Body of pancreas (tissue), 4 donors: ENCODE measurements at regions of chr5 and their contacts with region 1.

Region 1: GRCh38 chr5:178732281-178732680 is 1.8 kb upstream of the ZNF354A start:
- DNase-seq: no peak
- ATAC-seq: no peak
- H3K4me3 ChIP-seq: no peak overlapping the region
- H3K27ac ChIP-seq: no peak overlapping the region
- H3K4me1 ChIP-seq: peaks cover 11% of the 10 kb centered on the region
- H3K27me3 ChIP-seq: no peaks in the 10 kb centered on the region
- CTCF ChIP-seq: no peak
- POLR2A ChIP-seq: no peak

Region 2: DNA sequence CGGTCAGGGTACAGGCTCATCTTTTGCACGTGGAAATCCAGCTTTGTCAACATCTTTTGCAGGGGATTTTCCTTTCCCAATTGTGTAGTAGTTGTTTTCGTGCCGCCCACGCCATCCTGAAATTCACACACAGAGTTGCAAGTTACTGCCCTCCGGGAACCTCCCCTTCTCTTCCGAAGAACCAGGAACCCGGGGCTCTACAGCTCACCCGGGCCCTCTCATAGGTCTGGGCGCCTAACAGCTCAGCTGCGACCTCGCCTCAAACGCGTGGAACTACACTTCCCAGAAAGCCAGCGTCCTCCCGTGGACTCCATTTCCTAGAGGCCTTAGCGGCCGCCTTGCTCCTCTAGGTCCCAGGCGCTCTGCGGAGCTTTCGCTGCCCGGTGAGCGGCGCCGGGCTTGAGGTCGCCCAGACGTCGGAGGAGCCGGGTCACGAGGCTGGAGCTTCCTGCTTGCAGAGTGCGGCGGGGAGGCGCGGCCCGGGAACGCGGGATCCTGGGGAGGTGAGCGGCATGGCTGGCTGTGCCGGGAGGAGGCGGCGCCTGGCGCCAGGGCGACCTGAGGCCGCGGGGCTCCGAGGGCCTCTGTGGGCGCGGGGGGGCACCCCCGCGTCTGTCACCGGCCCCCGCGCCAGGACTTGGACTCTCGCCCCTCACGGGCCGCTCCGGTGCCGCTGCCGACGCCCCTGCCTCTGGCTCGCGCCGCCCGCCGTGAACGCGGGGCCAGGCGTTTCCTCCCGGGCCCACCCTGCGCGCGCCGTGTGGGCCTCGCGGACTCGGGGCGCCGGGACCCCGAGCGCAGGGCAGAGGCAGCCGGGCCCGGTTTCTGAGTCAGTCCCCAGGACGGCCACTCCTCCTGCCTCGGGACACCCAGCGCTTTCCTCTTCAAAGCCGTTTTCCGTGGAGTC is 127.6 kb after region 1 on chr5 and contains the start of gene ZNF354B:
- intact Hi-C with region 1: loop called (anchors 5 kb)
- DNase-seq: peak; percentile 89 to 95 (median 93)
- ATAC-seq: peak; percentile 98
- H3K4me3 ChIP-seq: peak within 1 kb of the TSS; percentile 80 to 95
- H3K27ac ChIP-seq: peak within 1 kb of the TSS; percentile 73 to 88 (median 84)
- H3K4me1 ChIP-seq: peaks cover 13% of the 10 kb centered on the region
- H3K27me3 ChIP-seq: no peaks in the 10 kb centered on the region
- CTCF ChIP-seq: peak in 2 of 7 experiments; percentile 23 to 32
- POLR2A ChIP-seq: peak; percentile 59 to 79 (median 76)
- total RNA-seq, gene ZNF354B: 21.3 to 33.9 TPM

Region 3: DNA sequence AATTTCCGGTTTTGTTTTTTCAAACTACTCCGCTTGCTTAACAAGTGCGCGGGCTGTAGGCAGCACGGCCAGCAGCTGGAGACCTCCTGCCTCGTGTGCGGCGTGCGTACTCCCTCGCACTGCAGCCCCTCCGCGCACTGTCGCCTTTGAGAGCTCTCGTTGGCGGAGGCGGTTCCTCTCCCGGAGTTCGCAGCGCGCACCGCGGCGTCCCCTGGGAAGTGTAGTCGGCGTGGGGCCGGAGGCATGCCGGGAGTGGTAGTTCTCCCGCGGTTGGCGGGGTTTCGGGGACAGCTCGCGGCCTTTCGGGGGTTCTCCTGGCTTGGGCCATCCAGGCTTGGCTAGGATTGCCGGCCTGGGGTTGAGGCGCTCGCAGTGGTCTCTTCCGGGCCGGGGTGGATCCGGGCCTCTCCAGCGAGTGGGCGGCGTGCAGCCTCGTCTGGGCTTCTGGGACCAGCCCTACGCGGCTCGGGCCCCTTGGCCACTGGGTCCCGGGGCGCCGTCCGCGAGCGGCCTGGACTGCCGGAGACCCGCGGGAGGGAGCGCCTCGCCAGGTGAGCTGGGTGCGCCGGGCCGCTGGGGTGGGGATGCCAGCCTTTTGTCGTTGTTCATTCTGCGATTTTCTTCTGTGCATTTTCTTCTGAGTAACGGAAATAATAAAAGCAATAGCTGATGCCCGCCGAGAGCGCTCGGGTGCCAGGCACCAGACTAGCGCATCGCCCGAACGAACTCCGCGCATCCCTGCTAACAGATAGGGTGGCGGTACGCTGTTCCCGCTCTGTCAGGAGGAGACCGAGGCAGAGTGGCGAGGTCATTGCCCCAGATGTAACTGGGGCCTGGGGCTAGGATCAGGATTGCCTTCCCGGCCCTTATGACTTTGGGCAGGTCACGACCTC is 328.1 kb after region 1 on chr5 and contains the start of gene ZNF354C:
- intact Hi-C with region 1: loop called (anchors 10 kb)
- DNase-seq: peak; percentile 82 to 86 (median 84)
- ATAC-seq: peak; percentile 96
- H3K4me3 ChIP-seq: peak within 1 kb of the TSS; percentile 72 to 84
- H3K27ac ChIP-seq: peak within 1 kb of the TSS; percentile 34 to 74 (median 60)
- H3K4me1 ChIP-seq: peaks cover 12% of the 10 kb centered on the region
- H3K27me3 ChIP-seq: no peaks in the 10 kb centered on the region
- CTCF ChIP-seq: peak in 1 of 7 experiments; percentile 15
- POLR2A ChIP-seq: peak; percentile 17 to 69 (median 53)
- total RNA-seq, gene ZNF354C: 3.6 to 4.0 TPM